ENCODE measurements at regions of chr9 and their contacts with region 1.

Region 1: GRCh38 chr9:38371495-38371894 is 21.0 kb upstream of the ALDH1B1 start:
- DNase-seq: peak; percentile 52 to 83
- H3K4me3 ChIP-seq: no peak overlapping the region
- H3K27ac ChIP-seq: no peak overlapping the region
- H3K4me1 ChIP-seq: peaks cover 0 to 8% (median 0%) of the 10 kb centered on the region in 4 donors
- H3K27me3 ChIP-seq: no peaks in the 10 kb centered on the region
- CTCF ChIP-seq: peak in 5 of 7 experiments; percentile 8 to 57 (median 30)
- EP300 ChIP-seq: no peak
- POLR2A ChIP-seq: no peak

Region 2: DNA sequence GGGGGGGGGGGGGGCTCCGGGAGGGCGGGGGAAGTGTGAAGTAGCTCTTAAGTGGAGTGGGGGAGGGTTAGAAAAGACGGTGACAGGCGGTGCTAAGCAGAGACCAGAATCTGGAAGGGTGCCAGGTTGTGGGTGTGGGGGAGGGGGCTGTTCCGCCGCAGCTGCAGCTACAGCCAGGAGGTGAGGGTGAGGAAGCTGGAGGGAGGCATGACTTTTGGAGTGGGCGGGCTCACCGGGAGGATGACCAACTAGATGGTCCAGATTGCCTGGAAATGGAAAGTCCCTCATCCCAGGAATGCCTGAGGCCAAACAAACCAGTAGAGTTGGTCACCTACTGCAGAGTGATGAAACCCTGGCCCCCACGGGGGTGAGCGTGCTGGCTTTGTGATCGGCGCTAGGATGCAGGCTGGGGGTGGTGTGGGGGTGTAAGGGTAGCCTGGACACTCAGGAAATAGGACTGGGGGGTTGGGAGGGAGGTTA is 144.4 kb before region 1 on chr9:
- intact Hi-C with region 1: no loop called
- DNase-seq: peak in 1 of 2 donors; percentile 93
- H3K4me3 ChIP-seq: peak overlapping the region in 2 of 4 donors; percentile 13 to 15
- H3K27ac ChIP-seq: no peak overlapping the region
- H3K4me1 ChIP-seq: peaks cover 5 to 16% (median 10%) of the 10 kb centered on the region in 4 donors
- H3K27me3 ChIP-seq: peaks cover 0 to 29% (median 0%) of the 10 kb centered on the region in 3 donors
- CTCF ChIP-seq: no peak
- EP300 ChIP-seq: no peak
- POLR2A ChIP-seq: no peak

Region 3: GRCh38 chr9:38243993-38244392 is 127.5 kb before region 1 on chr9:
- intact Hi-C with region 1: no loop called
- DNase-seq: no peak
- H3K4me3 ChIP-seq: no peak overlapping the region
- H3K27ac ChIP-seq: no peak overlapping the region
- H3K4me1 ChIP-seq: no peaks in the 10 kb centered on the region
- H3K27me3 ChIP-seq: no peaks in the 10 kb centered on the region
- CTCF ChIP-seq: no peak
- EP300 ChIP-seq: no peak
- POLR2A ChIP-seq: no peak

Region 4: DNA sequence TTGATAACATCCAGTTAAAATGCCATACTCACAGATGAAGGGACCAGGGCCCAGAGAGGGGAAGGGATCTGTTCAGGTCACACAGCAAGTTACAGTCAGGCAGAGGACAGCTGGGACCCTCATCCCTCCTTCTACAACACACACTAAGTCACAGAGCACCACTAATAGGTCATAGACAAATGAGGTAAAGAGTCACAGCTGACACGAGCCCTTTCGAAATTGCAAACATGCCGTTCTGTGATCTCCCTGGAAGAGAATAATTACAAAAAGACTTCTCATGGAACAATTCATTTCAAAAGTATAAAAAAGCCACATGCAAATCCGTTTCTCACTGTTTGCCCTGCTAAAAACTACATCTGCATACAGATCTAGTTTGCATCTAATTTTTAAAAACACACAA is 37.2 kb after region 1 on chr9:
- intact Hi-C with region 1: loop called (anchors 5 kb)
- DNase-seq: no peak
- H3K4me3 ChIP-seq: no peak overlapping the region
- H3K27ac ChIP-seq: no peak overlapping the region
- H3K4me1 ChIP-seq: no peaks in the 10 kb centered on the region
- H3K27me3 ChIP-seq: peaks cover 0 to 12% (median 0%) of the 10 kb centered on the region in 3 donors
- CTCF ChIP-seq: no peak
- EP300 ChIP-seq: no peak
- POLR2A ChIP-seq: no peak

Measured in stomach (tissue), 19 donors.